ENCODE measurements at regions of chr1 and their contacts with region 1.

Region 1: DNA sequence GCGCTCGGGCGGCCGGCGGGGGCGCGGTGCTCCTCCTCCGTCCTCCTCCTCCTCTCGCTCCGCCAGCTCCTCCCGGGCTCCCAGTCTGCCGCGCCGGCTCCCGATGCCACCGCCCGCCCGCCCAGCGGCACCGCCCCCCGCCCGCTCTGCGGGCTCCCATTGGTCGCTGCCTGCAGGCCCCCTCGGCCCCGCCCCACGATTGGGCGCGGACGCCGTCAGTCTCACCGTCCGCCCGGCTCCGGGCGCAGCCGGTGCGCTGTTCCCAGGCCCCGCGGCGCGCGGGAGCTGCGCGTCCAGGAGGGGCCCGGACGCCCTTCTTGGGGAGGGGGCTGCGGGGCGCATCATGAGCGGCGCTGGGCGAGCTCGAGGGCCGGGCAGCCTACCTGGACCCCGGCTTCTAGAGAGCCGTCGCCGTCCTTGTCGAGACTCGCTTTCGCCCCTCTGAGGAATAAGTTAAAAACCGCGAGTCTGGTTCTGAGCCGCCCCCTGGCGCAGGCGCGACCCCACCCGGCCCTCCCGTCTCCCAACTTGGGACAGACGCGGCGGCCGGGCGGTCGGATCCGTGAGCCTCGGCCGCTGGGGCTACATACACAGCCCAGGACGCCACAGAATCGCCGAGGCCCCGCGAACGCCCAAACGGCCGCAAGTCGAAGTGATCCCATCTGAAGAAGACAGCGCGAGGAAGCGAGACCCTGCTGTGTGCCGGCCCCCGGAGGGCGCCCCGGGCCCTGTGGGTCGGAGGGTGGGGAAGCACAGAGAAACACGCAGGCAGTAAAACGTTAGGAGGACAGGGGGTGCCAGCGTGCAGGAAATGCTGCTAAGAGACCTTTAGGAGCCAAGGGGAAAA is at the start of gene SIPA1L2:
- DNase-seq: peak; percentile 77 to 90 (median 84)
- H3K4me3 ChIP-seq: peak within 1 kb of the TSS in 1 of 2 donors; percentile 46
- H3K4me3 Mint-ChIP-seq: peak within 1 kb of the TSS; percentile 88 to 95 (median 90)
- H3K27ac ChIP-seq: peak within 1 kb of the TSS; percentile 11
- H3K27ac Mint-ChIP-seq: peak within 1 kb of the TSS in 5 of 7 donors; percentile 33 to 77 (median 66)
- H3K4me1 ChIP-seq: peaks cover 28% of the 10 kb centered on the region
- H3K4me1 Mint-ChIP-seq: peaks cover 17 to 39% (median 23%) of the 10 kb centered on the region in 4 donors
- H3K27me3 ChIP-seq: no peaks in the 10 kb centered on the region
- H3K27me3 Mint-ChIP-seq: peaks cover 14 to 16% of the 10 kb centered on the region in 2 donors
- total RNA-seq, gene SIPA1L2: 0.94 to 1.6 TPM

Region 2: GRCh38 chr1:231626535-231626945 is 1003.7 kb before region 1 on chr1 and contains the start of gene DISC1:
- CTCF ChIA-PET with region 1: no interaction called
- POLR2A ChIA-PET with region 1: no interaction called
- intact Hi-C with region 1: loop called (anchors 5 kb)
- DNase-seq: peak; percentile 66 to 79 (median 71)
- H3K4me3 ChIP-seq: peak within 1 kb of the TSS; percentile 43 to 79
- H3K4me3 Mint-ChIP-seq: peak within 1 kb of the TSS; percentile 94 to 100 (median 96)
- H3K27ac ChIP-seq: peak within 1 kb of the TSS; percentile 63
- H3K27ac Mint-ChIP-seq: peak within 1 kb of the TSS; percentile 91 to 98 (median 96)
- H3K4me1 ChIP-seq: peaks cover 32% of the 10 kb centered on the region
- H3K4me1 Mint-ChIP-seq: peaks cover 20 to 47% (median 33%) of the 10 kb centered on the region in 4 donors
- H3K27me3 ChIP-seq: no peaks in the 10 kb centered on the region
- H3K27me3 Mint-ChIP-seq: peaks cover 0 to 2% of the 10 kb centered on the region in 2 donors
- total RNA-seq, gene DISC1: 15.5 to 18.0 TPM

Region 3: GRCh38 chr1:231866392-231867331 is 763.6 kb before region 1 on chr1:
- CTCF ChIA-PET with region 1: interaction called, 58 read pairs
- POLR2A ChIA-PET with region 1: interaction called, 6 read pairs
- intact Hi-C with region 1: loop called (anchors 1 kb)
- DNase-seq: peak; percentile 44 to 58 (median 51)
- H3K4me3 ChIP-seq: no peak overlapping the region
- H3K4me3 Mint-ChIP-seq: peak overlapping the region in 4 of 8 donors; percentile 54 to 71 (median 64)
- H3K27ac ChIP-seq: no peak overlapping the region
- H3K27ac Mint-ChIP-seq: peak overlapping the region in 3 of 7 donors; percentile 58 to 77 (median 65)
- H3K4me1 ChIP-seq: peaks cover 27% of the 10 kb centered on the region
- H3K4me1 Mint-ChIP-seq: peaks cover 24 to 50% (median 40%) of the 10 kb centered on the region in 4 donors
- H3K27me3 ChIP-seq: no peaks in the 10 kb centered on the region
- H3K27me3 Mint-ChIP-seq: no peaks in the 10 kb centered on the region

Region 4: GRCh38 chr1:232447125-232447524 is 183.1 kb before region 1 on chr1:
- CTCF ChIA-PET with region 1: interaction called, 7 read pairs
- POLR2A ChIA-PET with region 1: no interaction called
- intact Hi-C with region 1: loop called (anchors 1 kb)
- DNase-seq: no peak
- H3K4me3 ChIP-seq: no peak overlapping the region
- H3K4me3 Mint-ChIP-seq: no peak overlapping the region
- H3K27ac ChIP-seq: no peak overlapping the region
- H3K27ac Mint-ChIP-seq: peak overlapping the region in 1 of 7 donors; percentile 62
- H3K4me1 ChIP-seq: no peaks in the 10 kb centered on the region
- H3K4me1 Mint-ChIP-seq: peaks cover 0 to 2% (median 0%) of the 10 kb centered on the region in 4 donors
- H3K27me3 ChIP-seq: no peaks in the 10 kb centered on the region
- H3K27me3 Mint-ChIP-seq: no peaks in the 10 kb centered on the region

Region 5: GRCh38 chr1:232599178-232600041 is 30.9 kb before region 1 on chr1:
- CTCF ChIA-PET with region 1: interaction called, 13 read pairs
- POLR2A ChIA-PET with region 1: interaction called, 3 read pairs
- intact Hi-C with region 1: no loop called
- DNase-seq: no peak
- H3K4me3 ChIP-seq: no peak overlapping the region
- H3K4me3 Mint-ChIP-seq: peak overlapping the region in 7 of 8 donors; percentile 31 to 67 (median 49)
- H3K27ac ChIP-seq: no peak overlapping the region
- H3K27ac Mint-ChIP-seq: peak overlapping the region; percentile 17 to 76 (median 49)
- H3K4me1 ChIP-seq: peaks cover 36% of the 10 kb centered on the region
- H3K4me1 Mint-ChIP-seq: peaks cover 25 to 54% (median 32%) of the 10 kb centered on the region in 4 donors
- H3K27me3 ChIP-seq: no peaks in the 10 kb centered on the region
- H3K27me3 Mint-ChIP-seq: no peaks in the 10 kb centered on the region

Region 6: GRCh38 chr1:232923739-232924386 is 293.6 kb after region 1 on chr1:
- CTCF ChIA-PET with region 1: no interaction called
- POLR2A ChIA-PET with region 1: no interaction called
- intact Hi-C with region 1: loop called (anchors 10 kb)
- DNase-seq: peak; percentile 69 to 88 (median 81)
- H3K4me3 ChIP-seq: no peak overlapping the region
- H3K4me3 Mint-ChIP-seq: peak overlapping the region; percentile 59 to 81 (median 78)
- H3K27ac ChIP-seq: peak overlapping the region; percentile 14
- H3K27ac Mint-ChIP-seq: peak overlapping the region; percentile 86 to 96 (median 93)
- H3K4me1 ChIP-seq: peaks cover 49% of the 10 kb centered on the region
- H3K4me1 Mint-ChIP-seq: peaks cover 25 to 46% (median 38%) of the 10 kb centered on the region in 4 donors
- H3K27me3 ChIP-seq: no peaks in the 10 kb centered on the region
- H3K27me3 Mint-ChIP-seq: no peaks in the 10 kb centered on the region

Measured in CD4-positive, alpha-beta memory T cell (primary cell).